CD4-positive, alpha-beta memory T cell (primary cell): ENCODE measurements at regions of chr4 and their contacts with region 1.

Region 1: GRCh38 chr4:17324386-17324830 is 187.5 kb downstream of the QDPR start:
- DNase-seq: peak; percentile 25 to 50 (median 34)
- H3K4me3 ChIP-seq: no peak overlapping the region
- H3K4me3 Mint-ChIP-seq: peak overlapping the region in 6 of 8 donors; percentile 2 to 64 (median 50)
- H3K27ac ChIP-seq: no peak overlapping the region
- H3K27ac Mint-ChIP-seq: peak overlapping the region in 5 of 7 donors; percentile 5 to 62 (median 20)
- H3K4me1 ChIP-seq: peaks cover 9% of the 10 kb centered on the region
- H3K4me1 Mint-ChIP-seq: peaks cover 9 to 10% (median 10%) of the 10 kb centered on the region in 4 donors
- H3K27me3 ChIP-seq: no peaks in the 10 kb centered on the region
- H3K27me3 Mint-ChIP-seq: peaks cover 0 to 5% of the 10 kb centered on the region in 2 donors

Region 2: GRCh38 chr4:16916719-16917337 is 407.6 kb before region 1 on chr4:
- CTCF ChIA-PET with region 1: interaction called, 3 read pairs
- POLR2A ChIA-PET with region 1: no interaction called
- intact Hi-C with region 1: loop called (anchors 2 kb)
- DNase-seq: peak; percentile 36 to 61 (median 58)
- H3K4me3 ChIP-seq: no peak overlapping the region
- H3K4me3 Mint-ChIP-seq: no peak overlapping the region
- H3K27ac ChIP-seq: no peak overlapping the region
- H3K27ac Mint-ChIP-seq: no peak overlapping the region
- H3K4me1 ChIP-seq: no peaks in the 10 kb centered on the region
- H3K4me1 Mint-ChIP-seq: peaks cover 0 to 3% (median 0%) of the 10 kb centered on the region in 4 donors
- H3K27me3 ChIP-seq: no peaks in the 10 kb centered on the region
- H3K27me3 Mint-ChIP-seq: no peaks in the 10 kb centered on the region

Region 3: DNA sequence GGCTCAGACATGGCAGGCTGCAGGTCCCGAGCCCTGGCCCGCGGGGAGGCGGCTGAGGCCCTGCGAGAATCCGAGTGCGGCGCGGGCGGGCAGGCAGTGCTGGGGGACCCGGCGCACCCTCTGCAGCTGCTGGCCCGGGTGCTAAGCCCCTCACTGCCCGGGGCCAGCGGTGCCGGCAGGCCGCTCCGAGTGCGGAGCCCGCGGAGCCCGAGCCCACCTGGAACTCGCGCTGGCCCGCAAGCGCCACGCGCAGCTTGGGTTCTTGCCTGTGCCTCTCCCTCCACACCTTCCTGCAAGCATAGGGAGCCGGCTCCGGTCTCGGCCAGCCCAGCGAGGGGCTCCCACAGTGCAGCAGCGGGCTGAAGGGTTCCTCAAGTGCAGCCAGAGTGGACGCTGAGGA is 90.0 kb after region 1 on chr4:
- CTCF ChIA-PET with region 1: no interaction called
- POLR2A ChIA-PET with region 1: no interaction called
- intact Hi-C with region 1: no loop called
- DNase-seq: no peak
- H3K4me3 ChIP-seq: no peak overlapping the region
- H3K4me3 Mint-ChIP-seq: no peak overlapping the region
- H3K27ac ChIP-seq: no peak overlapping the region
- H3K27ac Mint-ChIP-seq: no peak overlapping the region
- H3K4me1 ChIP-seq: no peaks in the 10 kb centered on the region
- H3K4me1 Mint-ChIP-seq: peaks cover 0 to 2% (median 0%) of the 10 kb centered on the region in 4 donors
- H3K27me3 ChIP-seq: no peaks in the 10 kb centered on the region
- H3K27me3 Mint-ChIP-seq: peaks cover 8 to 18% of the 10 kb centered on the region in 2 donors